PC-3 (cell line): ENCODE measurements at regions of chr4 and their contacts with region 1.

Region 1: GRCh38 chr4:61277785-61278760 is 77.9 kb downstream of the ADGRL3 start:
- DNase-seq: peak; percentile 92
- ATAC-seq: peak; percentile 100
- H3K4me3 ChIP-seq: no peak overlapping the region
- H3K27ac ChIP-seq: peak overlapping the region; percentile 14
- H3K4me1 ChIP-seq: peaks cover 9% of the 10 kb centered on the region
- H3K27me3 ChIP-seq: no peaks in the 10 kb centered on the region
- CTCF ChIP-seq: no peak

Region 2: GRCh38 chr4:61200187-61200915 is 77.7 kb before region 1 on chr4 and contains the start of gene ADGRL3:
- CTCF ChIA-PET with region 1: no interaction called
- POLR2A ChIA-PET with region 1: no interaction called
- intact Hi-C with region 1: loop called (anchors 5 kb)
- DNase-seq: no peak
- ATAC-seq: no peak
- H3K4me3 ChIP-seq: peak within 1 kb of the TSS; percentile 65
- H3K27ac ChIP-seq: no peak within 1 kb of the TSS
- H3K4me1 ChIP-seq: peaks cover 26% of the 10 kb centered on the region
- H3K27me3 ChIP-seq: peaks cover 20% of the 10 kb centered on the region
- CTCF ChIP-seq: no peak
- total RNA-seq, gene ADGRL3: 0.66 and 0.69 TPM in 2 replicates

Region 3: GRCh38 chr4:61239250-61239649 is 38.8 kb before region 1 on chr4:
- CTCF ChIA-PET with region 1: no interaction called
- POLR2A ChIA-PET with region 1: no interaction called
- intact Hi-C with region 1: no loop called
- DNase-seq: no peak
- ATAC-seq: no peak
- H3K4me3 ChIP-seq: no peak overlapping the region
- H3K27ac ChIP-seq: no peak overlapping the region
- H3K4me1 ChIP-seq: no peaks in the 10 kb centered on the region
- H3K27me3 ChIP-seq: no peaks in the 10 kb centered on the region
- CTCF ChIP-seq: no peak